Prostate gland (tissue), 2 donors: ENCODE measurements at regions of chr19 and their contacts with region 1.

Region 1: GRCh38 chr19:2694196-2694595 is 8.3 kb downstream of the GNG7 start:
- DNase-seq: no peak
- H3K4me3 ChIP-seq: no peak overlapping the region
- H3K27ac ChIP-seq: no peak overlapping the region
- H3K4me1 ChIP-seq: no peaks in the 10 kb centered on the region
- H3K27me3 ChIP-seq: no peaks in the 10 kb centered on the region
- CTCF ChIP-seq: no peak
- POLR2A ChIP-seq: no peak

Region 2: DNA sequence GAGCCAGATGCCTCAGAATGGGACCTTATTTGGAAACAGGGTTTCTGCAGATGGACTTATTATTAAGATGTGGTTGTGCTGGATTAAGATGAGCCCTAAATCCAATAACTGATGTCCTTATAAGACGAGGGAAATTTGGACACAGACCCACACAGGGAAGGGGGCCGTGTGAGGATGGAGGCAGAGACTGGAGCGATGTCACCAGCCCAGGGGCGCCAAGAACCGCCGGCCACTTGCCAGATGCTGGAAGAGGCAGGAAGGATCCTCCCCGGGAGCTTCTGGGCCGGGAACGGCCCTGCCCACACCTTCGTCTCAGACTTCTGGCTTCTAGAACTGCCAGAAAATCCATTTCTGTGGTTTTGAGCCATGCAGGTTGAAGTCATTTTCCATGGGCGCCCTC is 18.3 kb before region 1 on chr19:
- intact Hi-C with region 1: loop called (anchors 2 kb)
- DNase-seq: no peak
- H3K4me3 ChIP-seq: no peak overlapping the region
- H3K27ac ChIP-seq: peak overlapping the region in 1 of 2 donors; percentile 24
- H3K4me1 ChIP-seq: no peaks in the 10 kb centered on the region
- H3K27me3 ChIP-seq: no peaks in the 10 kb centered on the region
- CTCF ChIP-seq: no peak
- POLR2A ChIP-seq: no peak

Region 3: DNA sequence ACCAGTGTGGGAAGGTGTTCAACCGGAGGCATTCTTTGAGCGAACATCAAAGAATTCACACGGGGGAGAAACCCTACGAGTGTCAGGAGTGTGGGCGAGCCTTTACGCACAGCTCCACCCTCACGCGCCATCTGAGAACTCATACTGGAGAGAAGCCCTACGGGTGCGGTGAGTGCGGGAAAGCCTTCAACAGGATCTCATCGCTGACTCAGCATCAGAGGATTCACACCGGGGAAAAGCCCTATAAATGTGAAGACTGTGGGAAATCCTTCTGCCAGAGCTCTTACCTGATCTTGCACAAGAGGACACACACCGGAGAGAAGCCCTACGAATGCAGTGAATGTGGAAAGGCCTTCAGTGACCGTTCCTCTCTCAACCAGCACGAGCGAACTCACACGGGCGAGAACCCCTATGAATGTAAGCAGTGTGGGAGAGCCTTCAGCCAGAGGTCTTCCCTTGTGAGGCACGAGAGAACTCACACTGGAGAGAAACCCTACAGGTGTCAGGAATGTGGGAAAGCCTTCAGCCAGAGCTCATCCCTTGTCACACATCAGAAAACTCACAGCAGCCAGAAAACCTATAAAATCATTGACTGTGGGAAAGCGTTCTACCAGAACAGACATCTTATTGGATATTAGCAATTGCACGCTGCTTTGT is 140.1 kb after region 1 on chr19:
- intact Hi-C with region 1: no loop called
- DNase-seq: no peak
- H3K4me3 ChIP-seq: no peak overlapping the region
- H3K27ac ChIP-seq: no peak overlapping the region
- H3K4me1 ChIP-seq: no peaks in the 10 kb centered on the region
- H3K27me3 ChIP-seq: no peaks in the 10 kb centered on the region
- CTCF ChIP-seq: no peak
- POLR2A ChIP-seq: no peak